ENCODE measurements at regions of chr22 and their contacts with region 1.

Region 1: DNA sequence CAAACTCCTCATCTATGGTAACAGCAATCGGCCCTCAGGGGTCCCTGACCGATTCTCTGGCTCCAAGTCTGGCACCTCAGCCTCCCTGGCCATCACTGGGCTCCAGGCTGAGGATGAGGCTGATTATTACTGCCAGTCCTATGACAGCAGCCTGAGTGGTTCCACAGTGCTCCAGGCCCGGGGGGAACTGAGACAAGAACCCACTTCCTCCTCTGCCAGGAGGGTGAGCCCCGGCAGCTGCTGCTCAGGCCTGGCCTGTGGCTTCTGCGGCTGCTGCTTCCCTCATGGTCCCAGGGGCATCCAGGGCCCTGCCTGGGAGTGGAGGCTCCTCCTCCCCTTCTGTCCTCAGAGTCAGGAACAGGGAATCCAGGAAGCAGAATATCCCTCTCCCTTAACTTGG is 98.4 kb downstream of the ZNF280B start:
- DNase-seq: no peak
- H3K4me3 ChIP-seq: no peak overlapping the region
- H3K27ac ChIP-seq: no peak overlapping the region
- H3K4me1 ChIP-seq: no peaks in the 10 kb centered on the region
- H3K27me3 ChIP-seq: no peaks in the 10 kb centered on the region
- CTCF ChIP-seq: no peak
- POLR2A ChIP-seq: no peak

Region 2: DNA sequence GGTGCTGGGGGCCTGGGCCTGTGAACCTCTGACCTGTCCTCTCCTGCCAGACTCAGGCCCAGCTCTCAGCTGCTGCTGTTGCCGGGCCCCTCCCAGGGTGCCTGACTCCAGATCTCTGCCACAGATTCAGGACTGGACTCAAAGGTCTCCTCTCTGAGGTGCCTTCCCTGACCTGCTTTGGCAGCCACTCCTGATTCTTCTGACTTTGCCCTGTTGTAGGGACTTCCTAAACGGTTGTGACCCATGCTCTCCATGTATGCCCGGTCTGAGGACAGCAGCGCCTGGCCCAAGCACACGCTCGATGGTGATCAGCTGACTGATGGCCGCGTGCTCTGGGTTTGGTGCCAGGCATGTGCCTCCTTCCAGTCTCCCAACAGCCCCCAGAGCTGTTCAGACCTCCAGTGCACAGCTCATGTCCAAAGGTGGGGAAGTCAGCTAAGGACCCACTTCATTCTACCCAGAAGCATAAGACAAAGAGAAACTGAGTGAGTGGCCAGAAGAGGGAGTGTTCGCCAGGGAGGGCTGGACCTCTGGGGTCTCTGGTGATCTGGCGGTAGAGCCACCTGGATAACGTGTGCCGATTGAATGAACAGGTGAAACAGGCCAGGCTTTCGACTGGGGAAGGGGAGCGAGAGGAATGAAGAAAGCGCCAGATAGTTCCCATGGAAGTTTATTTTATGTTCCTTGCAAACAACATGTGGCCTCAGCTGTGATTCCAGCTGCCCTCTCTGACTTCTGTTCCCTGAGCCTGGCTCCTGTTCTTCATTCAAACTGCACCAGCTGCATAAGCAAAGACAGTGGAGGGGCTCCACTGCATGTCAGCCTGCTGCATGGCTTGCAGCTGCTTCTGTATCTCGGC is 419.4 kb before region 1 on chr22:
- intact Hi-C with region 1: loop called (anchors 5 kb)
- DNase-seq: no peak
- H3K4me3 ChIP-seq: no peak overlapping the region
- H3K27ac ChIP-seq: no peak overlapping the region
- H3K4me1 ChIP-seq: no peaks in the 10 kb centered on the region
- H3K27me3 ChIP-seq: no peaks in the 10 kb centered on the region
- CTCF ChIP-seq: no peak
- POLR2A ChIP-seq: no peak

Measured in breast epithelium (tissue), 4 donors.